Dorsolateral prefrontal cortex (tissue), 120 donors: ENCODE measurements at regions of chr15 and their contacts with region 1.

Region 1: DNA sequence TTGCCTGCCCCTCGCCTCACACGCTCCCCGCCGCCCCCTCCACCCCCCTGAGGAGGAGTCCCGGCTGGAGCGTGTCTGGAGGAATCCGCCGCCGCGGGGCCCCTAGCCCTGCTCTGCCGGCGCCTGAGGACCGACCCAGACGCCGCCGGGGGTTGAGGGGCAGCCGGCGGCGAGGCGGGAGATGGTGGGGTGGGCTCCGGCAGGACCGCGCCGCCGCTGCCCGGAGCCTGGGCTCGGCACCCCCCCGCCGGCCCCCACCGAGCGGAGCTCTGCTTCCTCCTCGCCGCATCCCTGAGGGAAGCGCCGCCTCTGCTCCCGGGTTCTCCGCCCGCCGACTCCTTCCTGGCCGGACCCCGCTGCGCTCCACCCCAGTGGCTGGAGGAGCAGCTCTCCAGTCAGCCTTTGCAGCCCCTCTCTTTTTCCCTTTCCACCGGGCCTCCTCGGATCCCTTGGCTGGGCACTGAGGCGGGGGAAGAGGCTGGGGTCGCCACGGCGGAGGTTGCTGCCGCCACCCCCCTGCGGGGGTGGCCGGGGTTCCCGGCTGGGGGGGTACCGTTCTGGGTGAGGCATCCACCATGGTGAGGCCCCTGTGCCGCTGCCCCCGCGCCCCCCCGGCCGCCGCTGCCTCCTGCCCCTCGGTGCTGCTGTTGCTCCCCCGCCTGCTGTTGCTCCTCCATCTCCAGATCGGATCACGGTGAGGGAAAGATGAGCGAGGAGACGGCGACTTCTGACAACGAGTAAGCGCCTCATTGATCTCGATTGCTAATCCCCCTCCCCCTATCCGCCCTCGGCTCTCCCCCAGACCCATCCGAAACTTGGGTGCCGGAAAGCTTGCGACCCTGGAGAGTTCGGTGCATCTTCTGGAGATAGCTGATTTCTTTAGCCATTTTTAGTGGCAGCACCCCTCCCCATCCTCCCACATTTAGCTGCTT is at the start of gene SPRED1:
- DNase-seq: peak; percentile 39 to 81 (median 60)
- H3K4me3 ChIP-seq: peak within 1 kb of the TSS; percentile 62 to 97 (median 88)
- H3K27ac ChIP-seq: peak within 1 kb of the TSS; percentile 87 to 100 (median 98)
- H3K27me3 ChIP-seq: no peaks in the 10 kb centered on the region
- CTCF ChIP-seq: no peak
- total RNA-seq, gene SPRED1: 32.0 to 67.9 (median 45.7) TPM

Region 2: DNA sequence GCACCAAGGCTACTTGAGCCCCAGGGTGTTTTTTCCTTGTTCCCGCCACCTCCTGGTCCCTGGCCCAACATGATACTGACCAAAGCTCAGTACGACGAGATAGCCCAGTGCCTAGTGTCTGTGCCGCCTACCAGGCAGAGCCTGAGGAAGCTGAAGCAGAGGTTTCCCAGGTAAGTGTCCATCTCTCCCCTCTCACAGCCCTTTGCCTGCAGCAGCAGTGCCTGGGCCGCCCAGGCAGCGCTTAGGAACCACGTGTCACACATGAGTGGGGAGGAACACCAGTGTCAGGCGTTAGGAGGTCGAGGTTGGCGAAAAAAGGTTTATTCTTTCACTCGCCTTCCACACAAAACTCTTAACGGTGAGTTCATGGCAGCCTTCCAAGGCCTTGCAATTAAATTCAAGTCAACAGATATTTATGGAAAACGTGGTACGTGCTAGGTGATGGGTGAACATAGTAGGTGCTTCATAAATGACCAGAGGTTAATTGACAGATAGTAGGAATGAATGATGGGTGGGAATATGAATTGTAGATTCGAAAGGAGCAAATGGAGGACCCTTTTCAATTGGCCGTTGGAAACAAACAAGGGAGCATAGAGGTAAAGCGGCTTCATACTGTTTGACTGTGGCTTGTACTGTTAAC is 1672.8 kb before region 1 on chr15:
- intact Hi-C with region 1: no loop called
- DNase-seq: peak in 7 of 10 donors; percentile 22 to 48 (median 34)
- H3K4me3 ChIP-seq: peak overlapping the region; percentile 68 to 95 (median 85)
- H3K27ac ChIP-seq: peak overlapping the region in 51 of 59 donors; percentile 4 to 92 (median 80)
- H3K27me3 ChIP-seq: no peaks in the 10 kb centered on the region
- CTCF ChIP-seq: peak in 5 of 56 donors; percentile 1 to 28 (median 5)

Region 3: GRCh38 chr15:37995461-37996347 is 257.0 kb before region 1 on chr15:
- intact Hi-C with region 1: loop called in 1 of 2 experiments (anchors 5 kb)
- DNase-seq: peak in 2 of 10 donors; percentile 40 to 58
- H3K4me3 ChIP-seq: peak overlapping the region in 50 of 59 donors; percentile 0 to 56 (median 28)
- H3K27ac ChIP-seq: peak overlapping the region; percentile 2 to 91 (median 81)
- H3K27me3 ChIP-seq: no peaks in the 10 kb centered on the region
- CTCF ChIP-seq: peak; percentile 61 to 98 (median 82)

Region 4: DNA sequence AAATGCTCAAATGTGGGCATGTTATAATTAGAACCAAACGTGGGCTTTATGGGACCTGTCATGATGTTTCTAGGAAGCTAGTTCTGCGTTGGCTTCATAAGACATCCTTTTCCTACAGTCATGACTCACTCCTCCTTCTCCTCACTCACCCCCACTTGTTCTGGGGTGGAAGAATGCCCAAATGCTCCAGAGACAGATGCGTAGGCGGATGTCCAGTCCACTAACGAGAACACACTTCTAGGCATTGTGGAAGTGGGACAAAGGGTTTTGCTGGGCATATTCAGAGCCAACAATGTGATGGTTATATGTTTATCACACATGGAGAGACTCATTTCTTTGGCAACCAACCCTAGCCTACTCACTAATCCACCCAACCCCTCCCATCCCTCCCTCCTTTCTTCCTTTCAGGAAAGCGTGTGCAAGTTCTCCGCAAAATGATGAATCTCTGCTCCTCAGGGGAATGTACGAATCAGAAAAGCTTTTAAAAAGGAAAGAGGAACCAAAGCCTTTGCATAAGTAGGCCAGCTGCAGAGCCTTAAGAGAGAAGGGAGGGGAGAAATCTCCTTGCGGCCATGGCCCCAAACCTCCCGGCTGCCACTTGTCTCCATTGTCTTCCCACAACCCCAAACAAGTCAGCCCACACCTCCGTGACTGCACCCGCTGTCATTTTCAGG is 123.1 kb before region 1 on chr15:
- intact Hi-C with region 1: loop called (anchors 2 to 5 kb)
- DNase-seq: peak in 8 of 10 donors; percentile 57 to 84 (median 63)
- H3K4me3 ChIP-seq: peak overlapping the region; percentile 27 to 70 (median 49)
- H3K27ac ChIP-seq: peak overlapping the region in 56 of 59 donors; percentile 49 to 89 (median 79)
- H3K27me3 ChIP-seq: no peaks in the 10 kb centered on the region
- CTCF ChIP-seq: peak in 2 of 56 donors; percentile 2 to 12

Region 5: GRCh38 chr15:38226608-38227266 is 26.0 kb before region 1 on chr15:
- intact Hi-C with region 1: loop called in 1 of 2 experiments (anchors 2 kb)
- DNase-seq: peak in 8 of 10 donors; percentile 9 to 89 (median 73)
- H3K4me3 ChIP-seq: peak overlapping the region in 24 of 59 donors; percentile 1 to 49 (median 18)
- H3K27ac ChIP-seq: peak overlapping the region; percentile 3 to 95 (median 86)
- H3K27me3 ChIP-seq: no peaks in the 10 kb centered on the region
- CTCF ChIP-seq: peak in 6 of 56 donors; percentile 13 to 28 (median 14)

Region 6: DNA sequence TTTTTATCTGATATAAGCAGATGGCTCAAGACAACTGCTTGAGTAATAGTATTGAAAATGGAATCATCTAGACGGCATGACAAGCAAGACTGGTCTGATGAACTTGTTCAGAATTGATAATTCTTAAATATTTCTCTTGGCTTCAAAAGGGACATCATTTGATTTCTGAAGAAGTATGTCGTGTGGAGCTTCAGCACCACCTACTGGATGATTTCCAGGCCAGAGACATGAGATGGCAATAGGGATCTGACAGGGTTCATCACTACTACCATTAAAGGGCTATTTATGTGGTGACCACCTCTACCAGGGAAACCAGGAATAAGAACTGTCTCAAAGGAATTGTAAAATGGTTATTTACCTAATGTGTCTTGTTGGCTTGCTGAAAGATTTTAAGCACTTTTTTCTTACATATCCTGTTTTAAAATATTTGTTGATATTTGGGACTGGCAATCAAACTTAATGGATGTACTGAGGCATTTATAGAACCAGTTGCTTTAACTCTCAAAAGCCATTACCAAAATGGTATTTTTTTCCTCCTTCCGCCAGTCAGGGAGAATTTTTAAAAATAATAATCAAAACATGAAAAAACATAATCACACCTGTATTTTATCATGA is 101.7 kb after region 1 on chr15:
- intact Hi-C with region 1: loop called (anchors 2 to 5 kb)
- DNase-seq: peak in 8 of 10 donors; percentile 24 to 89 (median 55)
- H3K4me3 ChIP-seq: no peak overlapping the region
- H3K27ac ChIP-seq: peak overlapping the region in 8 of 59 donors; percentile 3 to 57 (median 24)
- H3K27me3 ChIP-seq: no peaks in the 10 kb centered on the region
- CTCF ChIP-seq: peak; percentile 38 to 98 (median 86)

Region 7: GRCh38 chr15:39472621-39473297 is 1220.0 kb after region 1 on chr15:
- intact Hi-C with region 1: no loop called
- DNase-seq: no peak
- H3K4me3 ChIP-seq: no peak overlapping the region
- H3K27ac ChIP-seq: peak overlapping the region in 20 of 59 donors; percentile 7 to 76 (median 50)
- H3K27me3 ChIP-seq: no peaks in the 10 kb centered on the region
- CTCF ChIP-seq: no peak